ENCODE measurements at regions of chr13 and their contacts with region 1.

Region 1: DNA sequence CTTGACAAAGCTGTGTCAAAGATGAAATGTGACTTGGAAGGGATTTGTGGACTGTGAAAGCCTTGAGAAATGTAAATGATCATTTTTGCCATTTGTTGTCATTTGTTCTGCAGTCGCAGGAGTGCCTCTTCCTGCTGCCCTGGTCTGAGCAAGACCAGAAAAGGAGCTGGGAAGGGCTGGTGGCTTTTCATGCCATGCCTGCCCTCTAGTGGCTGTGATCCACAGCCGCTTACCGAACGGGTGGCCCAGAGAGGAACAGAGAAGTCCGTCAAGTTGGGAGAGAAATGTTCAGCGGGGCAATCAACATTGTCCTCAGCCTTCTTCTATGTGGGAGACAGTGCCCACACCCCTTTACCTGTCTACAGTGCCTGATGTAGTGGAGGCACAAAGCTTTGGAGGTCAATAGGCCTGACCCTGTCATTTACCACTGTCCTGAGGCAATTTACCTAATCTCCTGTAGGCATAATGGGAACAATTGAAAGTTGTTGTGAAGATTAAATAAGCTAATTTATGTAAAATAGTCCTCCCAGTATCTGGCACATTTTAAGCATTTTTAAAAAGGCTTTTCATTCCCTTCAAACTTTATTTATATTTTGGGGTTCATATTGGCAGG is 224.4 kb downstream of the B3GLCT start:
- DNase-seq: peak; percentile 13
- ATAC-seq: peak; percentile 100
- H3K4me3 ChIP-seq: no peak overlapping the region
- H3K27ac ChIP-seq: no peak overlapping the region
- H3K4me1 ChIP-seq: no peaks in the 10 kb centered on the region
- H3K27me3 ChIP-seq: 0 out of 4 replicates have a peak, but pooled peaks cover 0 to 3% of the 10 kb centered on the region in 2 experiments
- CTCF ChIP-seq: peak; percentile 91 to 93 (median 92)
- EP300 ChIP-seq: no peak
- POLR2A ChIP-seq: no peak
- RAD21 ChIP-seq: peak; percentile 79

Region 2: GRCh38 chr13:31242916-31243315 is 181.3 kb before region 1 on chr13:
- CTCF ChIA-PET with region 1: interaction called, 72 read pairs
- POLR2A ChIA-PET with region 1: no interaction called
- RAD21 ChIA-PET with region 1: interaction called, 9 read pairs
- SMC1A ChIA-PET with region 1: interaction called, 44 read pairs
- in situ Hi-C with region 1: no loop called
- intact Hi-C with region 1: no loop called
- DNase-seq: no peak
- ATAC-seq: no peak
- H3K4me3 ChIP-seq: no peak overlapping the region
- H3K27ac ChIP-seq: no peak overlapping the region
- H3K4me1 ChIP-seq: no peaks in the 10 kb centered on the region
- H3K27me3 ChIP-seq: no peaks in the 10 kb centered on the region; a peak in 1 of 4 replicates
- CTCF ChIP-seq: no peak
- EP300 ChIP-seq: no peak
- POLR2A ChIP-seq: no peak
- RAD21 ChIP-seq: no peak

Region 3: GRCh38 chr13:32228330-32229041 is 804.3 kb after region 1 on chr13:
- CTCF ChIA-PET with region 1: no interaction called
- POLR2A ChIA-PET with region 1: no interaction called
- RAD21 ChIA-PET with region 1: no interaction called
- SMC1A ChIA-PET with region 1: no interaction called
- in situ Hi-C with region 1: no loop called
- intact Hi-C with region 1: no loop called
- DNase-seq: no peak
- ATAC-seq: no peak
- H3K4me3 ChIP-seq: no peak overlapping the region
- H3K27ac ChIP-seq: no peak overlapping the region
- H3K4me1 ChIP-seq: no peaks in the 10 kb centered on the region
- H3K27me3 ChIP-seq: no peaks in the 10 kb centered on the region
- CTCF ChIP-seq: no peak
- EP300 ChIP-seq: no peak
- POLR2A ChIP-seq: no peak
- RAD21 ChIP-seq: no peak